HepG2 (cell line): ENCODE measurements at regions of chr11 and their contacts with region 1.

Region 1: GRCh38 chr11:65418711-65419459 is 3.7 kb upstream of the NEAT1 start:
- DNase-seq: peak; percentile 99
- ATAC-seq: peak; percentile 52
- H3K4me3 ChIP-seq: peak overlapping the region; percentile 66 to 87 (median 70)
- H3K27ac ChIP-seq: peak overlapping the region; percentile 100
- H3K4me1 ChIP-seq: peaks cover 67% of the 10 kb centered on the region
- H3K27me3 ChIP-seq: no peaks in the 10 kb centered on the region; a peak in 1 of 5 replicates
- CTCF ChIP-seq: no peak
- EP300 ChIP-seq: peak; percentile 14 to 87; a peak in 3 of 4 replicates
- POLR2A ChIP-seq: peak in 1 of 2 experiments; percentile 92; a peak in 2 of 4 replicates
- RAD21 ChIP-seq: peak; percentile 56

Region 2: GRCh38 chr11:65329944-65330403 is 88.9 kb before region 1 on chr11:
- CTCF ChIA-PET with region 1: no interaction called
- POLR2A ChIA-PET with region 1: interaction called, 24 read pairs
- in situ Hi-C with region 1: no loop called
- intact Hi-C with region 1: no loop called
- DNase-seq: peak; percentile 86
- ATAC-seq: peak; percentile 60
- H3K4me3 ChIP-seq: peak overlapping the region; percentile 20 to 41 (median 22); a peak in 2 of 6 replicates
- H3K27ac ChIP-seq: no peak overlapping the region
- H3K4me1 ChIP-seq: peaks cover 19% of the 10 kb centered on the region
- H3K27me3 ChIP-seq: no peaks in the 10 kb centered on the region; a peak in 1 of 5 replicates
- CTCF ChIP-seq: peak; percentile 82
- EP300 ChIP-seq: no peak
- POLR2A ChIP-seq: no peak
- RAD21 ChIP-seq: peak; percentile 65

Region 3: GRCh38 chr11:65375012-65375411 is 43.9 kb before region 1 on chr11:
- CTCF ChIA-PET with region 1: no interaction called
- POLR2A ChIA-PET with region 1: interaction called, 433 read pairs
- in situ Hi-C with region 1: loop called (anchors 5 kb)
- intact Hi-C with region 1: no loop called
- DNase-seq: no peak
- ATAC-seq: no peak
- H3K4me3 ChIP-seq: no peak overlapping the region
- H3K27ac ChIP-seq: no peak overlapping the region
- H3K4me1 ChIP-seq: peaks cover 85% of the 10 kb centered on the region
- H3K27me3 ChIP-seq: peaks cover 0 to 2% of the 10 kb centered on the region in 2 experiments; a peak in 2 of 5 replicates
- CTCF ChIP-seq: no peak
- EP300 ChIP-seq: no peak
- POLR2A ChIP-seq: no peak
- RAD21 ChIP-seq: no peak

Region 4: DNA sequence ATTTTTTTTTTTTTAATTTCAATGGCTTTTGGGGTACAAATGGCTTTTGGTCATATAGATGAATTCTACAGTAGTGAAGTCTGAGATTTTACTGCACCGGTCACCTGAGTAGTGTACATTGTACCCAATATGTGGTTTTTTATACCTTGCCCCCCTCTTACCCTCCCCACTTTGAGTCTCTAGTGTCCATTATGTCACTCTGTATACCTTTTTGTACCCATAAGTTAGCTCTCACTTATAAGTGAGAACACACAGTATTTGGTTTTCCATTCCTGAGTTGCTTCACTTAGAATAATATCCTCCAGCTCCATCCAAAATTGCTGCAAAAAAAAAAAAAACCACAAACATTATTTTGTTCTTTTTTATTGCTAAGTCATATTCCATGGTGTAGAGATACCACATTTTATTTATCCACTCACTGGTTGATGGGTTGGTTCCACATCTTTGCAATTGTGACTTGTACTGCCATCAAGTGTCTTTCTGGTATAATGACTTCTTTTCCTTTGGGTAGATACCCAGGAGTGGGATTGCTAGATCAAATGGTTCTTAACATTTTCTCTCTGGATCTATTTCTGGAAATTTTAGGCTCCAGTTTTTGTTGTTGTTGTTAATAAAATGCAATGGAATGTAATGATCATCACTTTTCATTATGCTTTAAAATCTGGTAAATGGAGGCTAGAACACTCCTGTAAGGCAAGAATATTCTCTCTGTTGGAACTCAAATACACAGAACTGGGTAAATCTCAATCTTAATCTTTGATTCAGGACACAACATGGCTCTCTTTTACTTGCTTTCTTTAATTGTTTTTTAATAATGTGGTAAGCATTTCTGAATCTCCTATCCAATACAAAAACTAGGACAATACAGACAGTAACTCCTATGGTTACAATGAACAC is 14.0 kb after region 1 on chr11:
- CTCF ChIA-PET with region 1: interaction called, 20 read pairs
- POLR2A ChIA-PET with region 1: interaction called, 147 read pairs
- in situ Hi-C with region 1: no loop called
- intact Hi-C with region 1: no loop called
- DNase-seq: no peak
- ATAC-seq: no peak
- H3K4me3 ChIP-seq: no peak overlapping the region
- H3K27ac ChIP-seq: no peak overlapping the region
- H3K4me1 ChIP-seq: peaks cover 88% of the 10 kb centered on the region
- H3K27me3 ChIP-seq: no peaks in the 10 kb centered on the region
- CTCF ChIP-seq: peak; percentile 43
- EP300 ChIP-seq: no peak
- POLR2A ChIP-seq: peak; percentile 32 to 52; a peak in 2 of 4 replicates
- RAD21 ChIP-seq: no peak

Region 5: GRCh38 chr11:65477149-65477965 is 58.5 kb after region 1 on chr11:
- CTCF ChIA-PET with region 1: no interaction called
- POLR2A ChIA-PET with region 1: interaction called, 232 read pairs
- in situ Hi-C with region 1: no loop called
- intact Hi-C with region 1: no loop called
- DNase-seq: peak; percentile 88
- ATAC-seq: peak; percentile 85
- H3K4me3 ChIP-seq: peak overlapping the region; percentile 75 to 90 (median 82)
- H3K27ac ChIP-seq: peak overlapping the region; percentile 95
- H3K4me1 ChIP-seq: peaks cover 62% of the 10 kb centered on the region
- H3K27me3 ChIP-seq: no peaks in the 10 kb centered on the region; a peak in 1 of 5 replicates
- CTCF ChIP-seq: no peak
- EP300 ChIP-seq: peak; percentile 59; a peak in 3 of 4 replicates
- POLR2A ChIP-seq: peak; percentile 72 to 86
- RAD21 ChIP-seq: peak; percentile 49; the same call in 1 of the 2 replicates

Region 6: DNA sequence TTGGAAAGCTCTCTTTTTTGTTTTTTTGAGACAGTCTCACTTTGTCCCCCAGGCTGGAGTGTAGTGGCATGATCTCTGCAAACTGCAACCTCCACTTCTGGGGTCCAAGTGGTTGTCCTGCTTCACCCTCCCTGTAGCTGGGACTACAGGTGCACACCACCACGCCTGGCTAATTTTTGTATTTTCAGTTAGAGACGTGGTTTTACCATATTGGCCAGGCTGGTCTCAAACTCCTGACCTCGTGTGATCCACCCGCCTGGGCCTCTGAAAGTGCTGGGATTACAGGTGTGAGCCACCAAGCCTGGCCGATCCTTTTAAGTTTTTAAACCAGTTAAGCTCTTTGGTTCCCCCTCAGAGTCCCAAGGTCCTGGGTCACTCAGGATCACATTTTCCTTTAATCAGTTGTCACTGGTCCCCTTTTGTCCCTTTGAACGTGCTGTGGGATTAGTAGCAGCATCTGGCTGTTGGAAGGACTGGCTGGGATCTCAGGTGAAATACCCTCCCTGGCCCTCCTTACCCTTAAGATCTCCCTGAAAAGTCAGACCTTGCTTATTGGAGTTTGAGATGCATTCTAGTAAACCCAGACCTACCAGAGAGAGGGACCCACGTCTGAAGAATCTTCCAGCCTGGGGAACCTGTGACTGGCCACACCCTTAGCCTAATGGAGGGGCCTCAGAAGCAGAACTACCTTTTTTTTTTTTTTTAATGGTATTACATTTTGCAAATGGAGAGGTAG is 88.1 kb after region 1 on chr11:
- CTCF ChIA-PET with region 1: interaction called, 20 read pairs
- POLR2A ChIA-PET with region 1: interaction called, 952 read pairs
- in situ Hi-C with region 1: no loop called
- intact Hi-C with region 1: loop called (anchors 2 kb)
- DNase-seq: no peak
- ATAC-seq: peak; percentile 41
- H3K4me3 ChIP-seq: no peak overlapping the region
- H3K27ac ChIP-seq: peak overlapping the region; percentile 49
- H3K4me1 ChIP-seq: peaks cover 63% of the 10 kb centered on the region
- H3K27me3 ChIP-seq: no peaks in the 10 kb centered on the region; a peak in 1 of 5 replicates
- CTCF ChIP-seq: no peak
- EP300 ChIP-seq: 0 out of 4 replicates have a peak, but pooled peaks of 1 of the 2 experiments have one; percentile 42
- POLR2A ChIP-seq: peak; percentile 50 to 80
- RAD21 ChIP-seq: peak; percentile 9; the same call in 1 of the 2 replicates

Region 7: GRCh38 chr11:65558002-65558931 is 139.4 kb after region 1 on chr11 and contains the start of gene LTBP3:
- CTCF ChIA-PET with region 1: no interaction called
- POLR2A ChIA-PET with region 1: interaction called, 11 read pairs
- in situ Hi-C with region 1: no loop called
- intact Hi-C with region 1: no loop called
- DNase-seq: peak; percentile 68
- ATAC-seq: peak; percentile 58
- H3K4me3 ChIP-seq: peak within 1 kb of the TSS; percentile 74 to 89 (median 87)
- H3K27ac ChIP-seq: peak within 1 kb of the TSS; percentile 94
- H3K4me1 ChIP-seq: peaks cover 72% of the 10 kb centered on the region
- H3K27me3 ChIP-seq: no peaks in the 10 kb centered on the region
- CTCF ChIP-seq: no peak
- EP300 ChIP-seq: no peak
- POLR2A ChIP-seq: no peak
- RAD21 ChIP-seq: no peak
- total RNA-seq, gene LTBP3: 4.2 and 12.2 TPM in 2 replicates